ENCODE measurements at regions of chr14 and their contacts with region 1.

Region 1: GRCh38 chr14:60064491-60065072 is 27.1 kb upstream of the PCNX4 start:
- DNase-seq: no peak
- ATAC-seq: no peak
- H3K4me3 ChIP-seq: no peak overlapping the region
- H3K27ac ChIP-seq: no peak overlapping the region
- H3K4me1 ChIP-seq: no peaks in the 10 kb centered on the region
- H3K27me3 ChIP-seq: no peaks in the 10 kb centered on the region
- CTCF ChIP-seq: peak; percentile 37 to 78 (median 63)

Region 2: GRCh38 chr14:59981564-59981963 is 83.0 kb before region 1 on chr14:
- intact Hi-C with region 1: no loop called
- DNase-seq: no peak
- ATAC-seq: no peak
- H3K4me3 ChIP-seq: no peak overlapping the region
- H3K27ac ChIP-seq: no peak overlapping the region
- H3K4me1 ChIP-seq: no peaks in the 10 kb centered on the region
- H3K27me3 ChIP-seq: no peaks in the 10 kb centered on the region
- CTCF ChIP-seq: no peak

Region 3: GRCh38 chr14:60184146-60184904 is 119.7 kb after region 1 on chr14:
- intact Hi-C with region 1: loop called (anchors 1 to 10 kb)
- DNase-seq: peak in 1 of 2 donors; percentile 32
- ATAC-seq: peak in 4 of 8 donors; percentile 34 to 63 (median 58)
- H3K4me3 ChIP-seq: peak overlapping the region in 9 of 10 donors; percentile 30 to 62 (median 50)
- H3K27ac ChIP-seq: peak overlapping the region in 6 of 10 donors; percentile 18 to 74 (median 42)
- H3K4me1 ChIP-seq: peaks cover 0 to 9% (median 0%) of the 10 kb centered on the region in 9 donors
- H3K27me3 ChIP-seq: no peaks in the 10 kb centered on the region
- CTCF ChIP-seq: peak; percentile 61 to 93 (median 80)

Region 4: DNA sequence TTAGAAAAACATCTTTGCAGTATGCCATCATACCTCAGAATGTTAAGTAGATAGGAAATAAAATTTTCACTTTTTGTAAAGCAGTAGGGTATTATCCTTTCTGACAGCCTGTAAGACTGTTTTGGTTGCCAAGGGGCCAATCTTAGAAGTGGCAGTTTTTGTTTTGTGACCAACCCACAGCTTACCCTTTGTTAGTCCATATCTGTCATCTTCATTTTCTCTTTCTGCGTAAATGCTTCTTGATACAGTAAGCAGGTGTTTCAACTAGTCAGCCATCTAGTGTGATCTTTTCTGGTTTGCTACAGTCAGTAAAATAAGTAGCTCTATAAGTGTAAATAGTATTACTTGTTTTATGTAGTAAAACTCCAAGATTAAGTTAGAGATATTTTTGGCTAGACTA is 193.3 kb after region 1 on chr14:
- intact Hi-C with region 1: no loop called
- DNase-seq: no peak
- ATAC-seq: no peak
- H3K4me3 ChIP-seq: no peak overlapping the region
- H3K27ac ChIP-seq: no peak overlapping the region
- H3K4me1 ChIP-seq: peaks cover 0 to 79% (median 65%) of the 10 kb centered on the region in 9 donors
- H3K27me3 ChIP-seq: no peaks in the 10 kb centered on the region
- CTCF ChIP-seq: no peak